B cell (primary cell): ENCODE measurements at regions of chr7 and their contacts with region 1.

Region 1: GRCh38 chr7:39746103-39746819 is 122.9 kb downstream of the RALA start:
- DNase-seq: peak; percentile 71
- ATAC-seq: peak; percentile 51
- H3K4me3 ChIP-seq: no peak overlapping the region
- H3K4me3 Mint-ChIP-seq: no peak overlapping the region
- H3K27ac ChIP-seq: no peak overlapping the region
- H3K27ac Mint-ChIP-seq: no peak overlapping the region
- H3K4me1 ChIP-seq: peaks cover 0 to 6% of the 10 kb centered on the region in 2 donors
- H3K4me1 Mint-ChIP-seq: peaks cover 15% of the 10 kb centered on the region
- H3K27me3 ChIP-seq: no peaks in the 10 kb centered on the region
- H3K27me3 Mint-ChIP-seq: no peaks in the 10 kb centered on the region
- CTCF ChIP-seq: peak; percentile 75

Region 2: GRCh38 chr7:39720574-39720973 is 25.7 kb before region 1 on chr7:
- CTCF ChIA-PET with region 1: interaction called, 10 read pairs
- POLR2A ChIA-PET with region 1: no interaction called
- intact Hi-C with region 1: no loop called
- DNase-seq: no peak
- ATAC-seq: no peak
- H3K4me3 ChIP-seq: no peak overlapping the region
- H3K4me3 Mint-ChIP-seq: no peak overlapping the region
- H3K27ac ChIP-seq: no peak overlapping the region
- H3K27ac Mint-ChIP-seq: no peak overlapping the region
- H3K4me1 ChIP-seq: no peaks in the 10 kb centered on the region
- H3K4me1 Mint-ChIP-seq: no peaks in the 10 kb centered on the region
- H3K27me3 ChIP-seq: no peaks in the 10 kb centered on the region
- H3K27me3 Mint-ChIP-seq: no peaks in the 10 kb centered on the region
- CTCF ChIP-seq: no peak